PC-9 (cell line): ENCODE measurements at regions of chr10 and their contacts with region 1.

Region 1: GRCh38 chr10:96129387-96130325 is at the start of gene ZNF518A:
- DNase-seq: peak; percentile 79 to 82
- H3K4me3 ChIP-seq: peak within 1 kb of the TSS; percentile 68
- H3K27ac ChIP-seq: peak within 1 kb of the TSS; percentile 92
- H3K4me1 ChIP-seq: peaks cover 28% of the 10 kb centered on the region
- H3K27me3 ChIP-seq: no peaks in the 10 kb centered on the region
- CTCF ChIP-seq: no peak
- total RNA-seq, gene ZNF518A: 11.4 and 12.6 TPM in 2 replicates

Region 2: DNA sequence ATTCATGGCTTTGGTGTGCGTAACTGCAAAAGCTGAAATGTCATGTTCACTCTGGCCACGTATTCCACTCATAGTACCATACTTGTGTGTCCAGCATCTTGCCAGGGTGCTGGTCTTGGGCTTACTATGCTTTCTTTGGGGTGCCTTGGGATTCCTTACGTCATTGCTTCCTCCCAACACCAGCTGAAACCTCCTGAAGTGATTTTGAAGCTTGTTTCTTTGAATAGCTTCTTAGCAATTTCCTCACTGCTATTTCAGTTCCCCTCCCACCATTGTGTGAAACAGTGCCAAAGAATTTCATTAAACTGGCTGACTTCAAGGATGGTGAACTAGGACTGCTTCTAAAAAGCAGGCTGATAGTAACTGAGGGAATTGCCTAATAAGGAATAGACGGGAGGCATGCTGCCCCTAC is 336.8 kb before region 1 on chr10:
- CTCF ChIA-PET with region 1: no interaction called
- POLR2A ChIA-PET with region 1: no interaction called
- intact Hi-C with region 1: no loop called
- DNase-seq: no peak
- H3K4me3 ChIP-seq: no peak overlapping the region
- H3K27ac ChIP-seq: no peak overlapping the region
- H3K4me1 ChIP-seq: peaks cover 7% of the 10 kb centered on the region; the same call in 1 of the 2 replicates
- H3K27me3 ChIP-seq: no peaks in the 10 kb centered on the region
- CTCF ChIP-seq: no peak

Region 3: DNA sequence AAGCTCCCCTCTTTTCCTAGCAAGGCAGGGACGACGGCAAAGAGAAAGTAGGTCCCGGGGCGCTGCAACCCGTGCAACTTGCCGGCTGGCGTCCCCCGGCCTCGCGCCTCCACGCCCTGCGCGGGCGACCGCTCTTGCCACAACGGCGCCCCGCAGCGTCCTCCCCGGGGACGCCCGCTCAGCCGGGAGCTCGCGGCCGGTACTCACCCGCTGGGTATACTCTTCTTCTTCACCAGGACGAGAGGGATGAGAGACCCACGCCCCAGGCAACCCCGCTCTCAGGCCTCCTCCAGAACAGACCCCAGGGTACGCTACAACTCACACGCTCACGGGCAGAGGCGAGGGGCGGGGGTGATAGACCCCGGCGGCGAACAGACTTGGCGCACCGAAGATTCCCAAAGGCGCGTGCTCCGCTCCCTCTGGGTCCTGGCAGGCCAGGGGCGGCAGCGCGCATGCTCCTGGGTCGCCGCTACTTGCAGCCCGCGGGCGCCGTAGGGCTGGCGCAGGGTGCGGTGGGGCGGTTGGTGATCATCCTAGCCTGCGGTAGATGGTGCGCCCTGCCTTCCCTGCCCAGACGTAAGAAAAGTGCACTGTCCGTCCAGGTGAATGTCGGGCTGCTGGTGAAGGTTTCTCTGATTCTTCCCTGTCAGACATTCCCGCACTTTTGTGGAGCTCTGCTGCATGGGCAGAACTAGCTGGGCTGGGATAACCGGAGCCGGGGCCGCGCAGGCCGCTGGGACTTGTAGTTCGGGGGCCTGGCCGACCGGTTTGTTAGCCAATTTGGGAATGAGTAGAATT is 222.0 kb before region 1 on chr10 and contains the start of gene CC2D2B:
- CTCF ChIA-PET with region 1: no interaction called
- POLR2A ChIA-PET with region 1: no interaction called
- intact Hi-C with region 1: loop called (anchors 10 kb)
- DNase-seq: peak; percentile 49 to 69
- H3K4me3 ChIP-seq: peak within 1 kb of the TSS; percentile 88
- H3K27ac ChIP-seq: no peak within 1 kb of the TSS
- H3K4me1 ChIP-seq: no peaks in the 10 kb centered on the region
- H3K27me3 ChIP-seq: no peaks in the 10 kb centered on the region
- CTCF ChIP-seq: no peak
- total RNA-seq, gene CC2D2B: not detected in 2 replicates

Region 4: DNA sequence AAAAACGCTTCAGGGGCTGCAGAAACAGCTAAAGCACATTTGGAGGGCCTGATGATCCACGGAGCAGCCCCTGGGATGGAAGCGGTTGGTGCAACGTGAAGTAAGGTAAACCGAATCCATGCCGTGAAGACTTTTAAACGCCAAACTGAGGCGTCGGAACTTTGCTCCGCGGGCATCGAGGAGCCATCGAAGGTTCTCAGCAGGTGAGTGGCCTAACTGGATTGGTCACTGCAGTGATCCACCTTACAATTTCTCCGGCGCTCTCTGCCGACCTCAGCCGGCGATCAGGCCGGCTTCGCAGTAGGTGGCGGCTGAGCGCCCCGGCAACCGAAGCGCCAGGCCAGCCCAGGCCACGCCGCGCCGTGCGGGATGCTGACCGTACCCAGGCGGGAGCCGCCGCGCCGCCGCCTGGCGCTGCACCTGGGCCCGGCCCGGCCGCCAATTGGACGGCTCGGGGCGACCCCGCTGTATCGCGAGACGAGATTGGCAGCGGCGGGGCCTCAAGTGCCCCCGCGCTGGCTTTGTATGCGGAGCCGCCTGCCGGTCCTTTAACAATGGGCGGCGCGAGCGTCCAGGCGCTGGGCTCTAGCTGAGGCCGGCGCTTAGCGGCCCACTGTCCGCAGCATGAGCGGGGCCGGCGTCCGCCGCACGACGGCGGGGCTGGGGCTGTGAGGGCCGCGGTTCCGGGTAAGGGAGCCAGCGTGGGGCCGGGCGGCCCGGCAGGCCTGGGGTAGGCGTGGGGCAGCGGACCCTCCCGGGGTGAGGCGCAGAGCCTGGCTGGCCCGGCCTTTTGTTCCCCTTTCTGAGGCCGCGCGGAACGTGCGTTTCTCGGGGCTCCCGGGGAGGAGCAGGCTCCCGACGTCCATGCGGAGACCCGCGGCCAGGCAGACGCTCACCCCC is 86.4 kb before region 1 on chr10 and contains the start of gene CCNJ:
- CTCF ChIA-PET with region 1: no interaction called
- POLR2A ChIA-PET with region 1: no interaction called
- intact Hi-C with region 1: loop called (anchors 2 kb)
- DNase-seq: peak; percentile 64 to 81
- H3K4me3 ChIP-seq: peak within 1 kb of the TSS; percentile 75
- H3K27ac ChIP-seq: peak within 1 kb of the TSS; percentile 37
- H3K4me1 ChIP-seq: peaks cover 15% of the 10 kb centered on the region; the same call in 1 of the 2 replicates
- H3K27me3 ChIP-seq: no peaks in the 10 kb centered on the region
- CTCF ChIP-seq: no peak
- total RNA-seq, gene CCNJ: 2.5 TPM in 2 replicates

Region 5: GRCh38 chr10:96089670-96090462 is 39.8 kb before region 1 on chr10:
- CTCF ChIA-PET with region 1: no interaction called
- POLR2A ChIA-PET with region 1: interaction called, 16 read pairs
- intact Hi-C with region 1: loop called (anchors 1 kb)
- DNase-seq: peak; percentile 74 to 78
- H3K4me3 ChIP-seq: peak overlapping the region; percentile 93
- H3K27ac ChIP-seq: peak overlapping the region; percentile 87
- H3K4me1 ChIP-seq: no peaks in the 10 kb centered on the region
- H3K27me3 ChIP-seq: 0 out of 2 replicates have a peak, but pooled peaks cover 11% of the 10 kb centered on the region
- CTCF ChIP-seq: no peak

Region 6: DNA sequence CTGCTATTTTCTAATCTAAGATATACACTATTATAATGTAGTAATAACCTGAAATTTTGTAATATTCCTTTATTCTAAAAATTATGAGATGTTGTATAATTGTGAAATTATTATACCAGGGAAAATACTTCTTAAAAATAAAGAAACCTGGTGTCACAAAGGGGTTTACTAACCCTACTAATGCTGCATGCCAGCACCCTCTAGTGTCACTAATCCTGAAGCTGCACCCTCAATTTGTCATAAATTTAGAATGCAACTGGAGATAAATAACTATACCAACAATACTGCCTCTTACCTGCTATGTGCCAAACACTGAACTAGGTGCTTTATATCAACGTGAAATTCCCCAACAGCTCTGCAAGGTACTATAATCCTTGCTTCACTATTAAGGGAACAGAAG is 426.3 kb after region 1 on chr10:
- CTCF ChIA-PET with region 1: no interaction called
- POLR2A ChIA-PET with region 1: no interaction called
- intact Hi-C with region 1: no loop called
- DNase-seq: no peak
- H3K4me3 ChIP-seq: no peak overlapping the region
- H3K27ac ChIP-seq: no peak overlapping the region
- H3K4me1 ChIP-seq: no peaks in the 10 kb centered on the region
- H3K27me3 ChIP-seq: no peaks in the 10 kb centered on the region
- CTCF ChIP-seq: peak; percentile 45; the same call in 1 of the 2 replicates